AG04449 (cell line): ENCODE measurements at regions of chr1 and their contacts with region 1.

Region 1: DNA sequence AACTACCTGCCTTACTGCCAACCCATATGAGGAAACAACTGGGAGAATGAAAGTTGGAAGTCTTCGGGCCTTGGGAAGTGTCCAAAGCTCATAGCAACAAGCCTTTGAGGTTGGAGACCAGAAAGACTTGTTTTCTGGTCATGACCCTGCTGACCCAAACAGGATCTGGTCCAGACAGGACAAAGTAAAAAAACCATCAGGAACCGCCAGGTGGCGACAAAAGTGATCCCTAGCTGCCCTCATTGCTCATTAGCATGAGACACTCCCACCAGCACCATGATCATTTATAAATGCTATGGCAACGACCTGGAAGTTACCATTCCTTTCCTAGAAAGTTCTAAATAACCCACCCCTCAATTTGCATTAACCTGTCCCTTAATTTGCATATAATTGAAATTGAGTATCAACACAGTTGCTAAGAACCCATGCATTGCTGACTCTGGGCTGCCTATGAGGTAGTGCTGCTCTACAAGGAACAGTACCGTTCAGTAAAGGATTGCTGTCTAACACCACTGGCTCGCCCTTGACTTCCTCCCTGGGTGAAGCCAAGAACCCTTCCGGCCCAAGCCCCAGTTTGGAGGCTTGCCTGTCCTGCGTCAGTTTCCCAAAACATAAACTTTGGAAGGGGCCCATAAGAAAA is 89.0 kb downstream of the URB2 start:
- DNase-seq: no peak
- H3K4me3 ChIP-seq: no peak overlapping the region
- CTCF ChIP-seq: peak; percentile 27

Region 2: GRCh38 chr1:229730573-229730972 is 15.5 kb after region 1 on chr1:
- CTCF ChIA-PET with region 1: no interaction called
- POLR2A ChIA-PET with region 1: no interaction called
- DNase-seq: no peak
- H3K4me3 ChIP-seq: no peak overlapping the region
- CTCF ChIP-seq: no peak

Region 3: DNA sequence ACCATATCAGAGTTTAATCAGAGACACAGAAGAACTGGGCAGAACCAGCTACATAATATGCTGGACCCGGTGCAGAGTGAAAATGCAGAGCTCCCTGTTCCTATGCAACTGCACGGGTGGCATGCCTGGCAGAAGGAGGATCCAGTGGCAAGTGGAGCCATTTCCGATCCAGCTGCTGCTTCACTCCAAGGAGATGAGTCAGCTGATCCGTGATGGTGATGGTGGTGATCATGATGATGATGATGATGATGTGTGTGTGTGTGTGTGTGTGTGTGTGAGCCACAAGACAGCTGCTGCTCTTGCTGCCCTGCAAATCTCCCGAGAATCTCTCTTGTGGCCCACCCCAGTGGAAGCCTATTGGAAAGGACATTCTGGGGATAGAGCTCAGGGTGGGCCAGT is 44.0 kb after region 1 on chr1:
- CTCF ChIA-PET with region 1: interaction called, 10 read pairs
- POLR2A ChIA-PET with region 1: no interaction called
- DNase-seq: peak; percentile 41
- H3K4me3 ChIP-seq: no peak overlapping the region
- CTCF ChIP-seq: no peak

Region 4: GRCh38 chr1:230270559-230271281 is 555.6 kb after region 1 on chr1:
- CTCF ChIA-PET with region 1: interaction called, 10 read pairs
- POLR2A ChIA-PET with region 1: no interaction called
- DNase-seq: no peak
- H3K4me3 ChIP-seq: no peak overlapping the region
- CTCF ChIP-seq: no peak

Region 5: DNA sequence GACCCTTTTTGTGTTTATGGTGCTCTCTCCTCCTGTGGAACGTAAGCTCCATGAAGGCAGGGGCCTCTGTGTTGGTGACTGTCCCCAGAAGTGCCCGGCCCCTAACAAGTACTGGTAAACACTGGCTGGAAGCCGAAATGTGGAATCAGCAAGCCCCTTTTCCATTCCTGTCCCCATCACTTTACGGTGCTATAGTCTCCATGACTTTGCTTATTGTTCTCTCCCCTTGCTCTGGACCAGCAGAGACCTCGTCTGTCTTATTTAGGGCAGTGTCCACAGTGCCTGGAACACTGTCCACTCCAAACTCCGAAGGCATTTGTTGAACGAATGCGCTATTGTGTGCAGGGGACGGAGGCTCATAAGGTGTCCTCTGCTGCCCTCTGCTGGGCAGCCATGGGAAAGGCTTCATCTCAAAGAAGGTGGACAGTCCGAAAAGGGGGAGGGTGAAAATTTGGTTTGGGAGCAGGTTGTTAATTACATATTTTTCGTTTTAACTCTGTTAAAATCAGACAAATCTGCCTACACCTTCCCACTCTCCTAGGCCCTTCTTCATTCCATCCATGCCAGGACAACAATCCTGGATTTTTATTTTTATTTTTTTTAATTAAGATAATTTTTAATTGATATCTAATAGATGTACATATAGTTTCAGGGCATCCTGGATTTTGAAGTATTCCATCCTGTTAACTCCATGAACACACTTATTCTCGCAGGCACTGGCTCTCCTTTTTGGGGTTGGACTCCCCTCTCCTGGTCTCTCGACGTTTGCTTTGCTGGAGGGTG is 595.5 kb after region 1 on chr1:
- CTCF ChIA-PET with region 1: interaction called, 31 read pairs
- POLR2A ChIA-PET with region 1: no interaction called
- DNase-seq: no peak
- H3K4me3 ChIP-seq: no peak overlapping the region
- CTCF ChIP-seq: peak; percentile 85